Common myeloid progenitor, CD34-positive (primary cell): ENCODE measurements at regions of chr9 and their contacts with region 1.

Region 1: DNA sequence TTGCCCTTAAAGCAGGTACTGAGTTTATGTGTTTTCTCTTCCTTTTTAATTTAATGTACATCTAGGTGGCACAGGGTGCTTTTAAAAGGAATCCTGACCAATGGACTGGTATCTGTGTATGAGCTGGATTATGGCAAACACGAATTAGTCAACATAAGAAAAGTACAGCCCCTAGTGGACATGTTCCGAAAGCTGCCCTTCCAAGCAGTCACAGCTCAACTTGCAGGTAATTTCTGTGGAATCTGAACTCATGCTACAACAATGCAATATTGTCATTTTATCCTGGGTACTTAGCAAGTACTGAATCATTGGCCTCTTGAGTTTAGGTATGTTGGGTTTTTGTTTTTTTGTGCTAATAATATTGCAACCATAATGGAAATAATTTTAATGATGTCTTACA is 14.4 kb upstream of the TMOD1 start:
- DNase-seq: peak in 1 of 3 donors; percentile 19
- H3K4me3 ChIP-seq: no peak overlapping the region
- H3K27ac ChIP-seq: no peak overlapping the region
- H3K4me1 ChIP-seq: no peaks in the 10 kb centered on the region
- H3K27me3 ChIP-seq: no peaks in the 10 kb centered on the region

Region 2: DNA sequence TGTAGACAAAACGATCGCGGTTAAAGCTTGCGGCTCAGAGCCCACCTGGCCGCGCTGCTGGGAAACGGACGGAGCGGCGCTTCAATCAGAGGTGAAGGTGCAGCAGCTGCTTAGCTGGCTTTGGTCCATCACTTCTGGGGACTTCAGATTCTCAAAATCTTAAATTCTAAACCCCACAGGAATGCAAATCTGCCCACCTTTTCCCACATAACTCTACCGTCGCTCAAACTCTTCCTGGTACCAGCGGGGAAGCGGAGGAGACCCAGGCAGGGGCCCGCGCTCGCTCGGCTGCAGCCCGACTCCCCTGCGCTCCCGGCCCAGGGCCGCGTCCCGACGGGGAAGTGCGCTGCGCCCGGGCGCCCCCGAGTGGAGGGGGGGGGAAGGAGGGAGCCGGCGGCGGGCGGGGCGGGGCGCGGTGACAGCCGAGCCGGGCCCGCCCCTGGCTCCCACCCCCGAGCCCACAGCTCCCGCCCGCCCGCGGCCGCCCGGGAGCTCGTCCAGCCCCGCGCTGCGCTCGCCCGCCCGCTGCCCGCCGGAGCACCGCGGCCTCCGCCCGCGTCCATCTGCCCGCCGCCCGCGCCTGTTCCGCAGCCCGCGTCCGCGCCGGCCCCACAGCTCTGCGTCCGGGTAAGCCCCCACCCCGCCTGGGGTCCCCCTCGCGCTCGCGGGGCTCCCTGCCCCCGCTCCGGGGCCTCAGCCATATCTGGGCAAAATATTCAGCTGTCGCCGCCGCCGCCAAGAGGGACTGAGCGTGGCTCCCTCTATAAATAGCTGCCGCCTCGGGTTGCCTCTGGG is 14.3 kb after region 1 on chr9 and contains the start of gene TMOD1:
- CTCF ChIA-PET with region 1: interaction called, 13 read pairs
- POLR2A ChIA-PET with region 1: no interaction called
- DNase-seq: peak; percentile 51 to 72 (median 55)
- H3K4me3 ChIP-seq: peak within 1 kb of the TSS; percentile 58 to 78 (median 67)
- H3K27ac ChIP-seq: peak within 1 kb of the TSS in 1 of 2 experiments; percentile 71
- H3K4me1 ChIP-seq: peaks cover 0 to 20% (median 18%) of the 10 kb centered on the region in 4 experiments
- H3K27me3 ChIP-seq: peaks cover 8 to 53% (median 31%) of the 10 kb centered on the region in 5 experiments

Region 3: GRCh38 chr9:97570899-97571298 is 83.8 kb after region 1 on chr9:
- CTCF ChIA-PET with region 1: no interaction called
- POLR2A ChIA-PET with region 1: no interaction called
- DNase-seq: no peak
- H3K4me3 ChIP-seq: no peak overlapping the region
- H3K27ac ChIP-seq: no peak overlapping the region
- H3K4me1 ChIP-seq: peaks cover 0 to 21% (median 12%) of the 10 kb centered on the region in 4 experiments
- H3K27me3 ChIP-seq: no peaks in the 10 kb centered on the region